ENCODE measurements at regions of chr6 and their contacts with region 1.

Region 1: DNA sequence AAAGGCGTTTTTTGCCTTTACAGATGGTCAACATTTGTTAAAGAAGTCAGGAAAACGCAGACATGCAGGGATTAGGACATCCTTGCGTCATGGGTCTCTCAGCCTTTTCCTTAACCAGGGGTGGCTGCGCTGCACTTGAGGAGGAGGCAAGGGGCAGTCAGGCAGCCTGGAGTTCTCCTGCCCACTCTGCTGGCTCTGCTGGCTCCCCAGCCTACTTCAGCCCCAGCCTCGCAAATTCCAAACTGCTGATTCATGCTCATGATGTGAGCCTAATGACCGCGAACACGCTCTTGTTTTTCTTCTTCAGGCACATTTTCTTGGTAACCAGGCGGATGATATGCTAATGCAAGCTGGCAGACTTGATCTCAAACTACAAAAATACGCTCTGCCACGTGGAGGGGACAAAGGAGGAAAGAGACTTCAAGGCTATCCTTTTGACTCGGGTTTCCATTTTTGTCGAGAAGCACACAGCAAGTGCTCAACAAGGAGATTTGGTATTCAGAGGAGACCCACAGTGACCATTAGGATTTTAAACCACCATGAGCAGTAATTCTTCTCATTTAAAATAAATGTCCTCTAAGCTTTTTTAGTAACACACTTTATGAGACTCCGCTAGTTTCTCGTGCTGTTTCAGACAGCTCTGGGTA is 290.3 kb upstream of the STXBP5 start:
- DNase-seq: peak; percentile 80 to 93
- H3K4me3 ChIP-seq: peak overlapping the region; percentile 34; the same call in 1 of the 2 replicates
- H3K27ac ChIP-seq: peak overlapping the region; percentile 95
- H3K4me1 ChIP-seq: peaks cover 45% of the 10 kb centered on the region
- H3K27me3 ChIP-seq: no peaks in the 10 kb centered on the region
- CTCF ChIP-seq: no peak

Region 2: GRCh38 chr6:146423452-146423851 is 490.5 kb before region 1 on chr6:
- CTCF ChIA-PET with region 1: no interaction called
- POLR2A ChIA-PET with region 1: no interaction called
- intact Hi-C with region 1: no loop called
- DNase-seq: no peak
- H3K4me3 ChIP-seq: no peak overlapping the region
- H3K27ac ChIP-seq: no peak overlapping the region
- H3K4me1 ChIP-seq: no peaks in the 10 kb centered on the region
- H3K27me3 ChIP-seq: no peaks in the 10 kb centered on the region
- CTCF ChIP-seq: no peak

Region 3: DNA sequence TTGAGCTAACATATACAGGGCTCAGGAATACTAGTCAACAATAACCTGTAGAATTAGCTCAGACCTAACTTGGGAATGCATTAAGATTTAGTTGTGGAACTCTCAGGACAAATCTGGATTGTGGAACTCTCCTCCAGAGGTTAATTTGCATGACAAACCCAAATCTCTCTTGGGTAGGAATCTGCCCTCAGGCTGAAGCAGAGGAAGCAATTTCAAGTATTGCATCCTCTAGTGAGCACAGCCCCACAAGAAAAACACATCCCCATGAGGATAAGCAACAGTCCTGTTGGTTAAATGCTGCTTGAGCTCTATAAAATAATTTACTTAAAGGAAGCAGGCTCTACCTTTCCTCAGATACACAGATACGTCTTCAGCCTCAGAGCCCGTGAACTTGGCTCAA is 119.3 kb after region 1 on chr6:
- CTCF ChIA-PET with region 1: no interaction called
- POLR2A ChIA-PET with region 1: no interaction called
- intact Hi-C with region 1: no loop called
- DNase-seq: no peak
- H3K4me3 ChIP-seq: no peak overlapping the region
- H3K27ac ChIP-seq: no peak overlapping the region
- H3K4me1 ChIP-seq: no peaks in the 10 kb centered on the region
- H3K27me3 ChIP-seq: no peaks in the 10 kb centered on the region
- CTCF ChIP-seq: no peak

Region 4: GRCh38 chr6:147202516-147203312 is 288.7 kb after region 1 on chr6:
- CTCF ChIA-PET with region 1: no interaction called
- POLR2A ChIA-PET with region 1: no interaction called
- intact Hi-C with region 1: loop called (anchors 2 kb)
- DNase-seq: peak; percentile 63 to 86
- H3K4me3 ChIP-seq: peak overlapping the region; percentile 77
- H3K27ac ChIP-seq: no peak overlapping the region
- H3K4me1 ChIP-seq: peaks cover 29% of the 10 kb centered on the region
- H3K27me3 ChIP-seq: no peaks in the 10 kb centered on the region
- CTCF ChIP-seq: no peak

Region 5: GRCh38 chr6:147310366-147310920 is 396.5 kb after region 1 on chr6:
- CTCF ChIA-PET with region 1: interaction called, 10 read pairs
- POLR2A ChIA-PET with region 1: no interaction called
- intact Hi-C with region 1: no loop called
- DNase-seq: no peak
- H3K4me3 ChIP-seq: no peak overlapping the region
- H3K27ac ChIP-seq: no peak overlapping the region
- H3K4me1 ChIP-seq: no peaks in the 10 kb centered on the region
- H3K27me3 ChIP-seq: no peaks in the 10 kb centered on the region
- CTCF ChIP-seq: no peak

Region 6: GRCh38 chr6:147447835-147448611 is 534.1 kb after region 1 on chr6:
- CTCF ChIA-PET with region 1: no interaction called
- POLR2A ChIA-PET with region 1: no interaction called
- intact Hi-C with region 1: no loop called
- DNase-seq: peak in 1 of 2 experiments; percentile 37
- H3K4me3 ChIP-seq: peak overlapping the region; percentile 35; the same call in 1 of the 2 replicates
- H3K27ac ChIP-seq: no peak overlapping the region
- H3K4me1 ChIP-seq: no peaks in the 10 kb centered on the region
- H3K27me3 ChIP-seq: no peaks in the 10 kb centered on the region; the same call in 1 of the 2 replicates
- CTCF ChIP-seq: no peak